ENCODE measurements at regions of chr11 and their contacts with region 1.

Region 1: GRCh38 chr11:119323538-119324033 is 6.7 kb upstream of the MCAM start:
- H3K4me3 ChIP-seq: no peak overlapping the region
- H3K27ac ChIP-seq: no peak overlapping the region
- H3K4me1 ChIP-seq: no peaks in the 10 kb centered on the region; the same call in 1 of the 2 replicates
- CTCF ChIP-seq: peak; percentile 44; the same call in 1 of the 2 replicates

Region 2: GRCh38 chr11:118870396-118871345 is 452.9 kb before region 1 on chr11:
- CTCF ChIA-PET with region 1: no interaction called
- POLR2A ChIA-PET with region 1: no interaction called
- H3K4me3 ChIP-seq: no peak overlapping the region
- H3K27ac ChIP-seq: no peak overlapping the region
- H3K4me1 ChIP-seq: no peaks in the 10 kb centered on the region
- CTCF ChIP-seq: no peak

Region 3: GRCh38 chr11:119196833-119197483 is 126.6 kb before region 1 on chr11:
- CTCF ChIA-PET with region 1: interaction called, 12 read pairs
- POLR2A ChIA-PET with region 1: no interaction called
- H3K4me3 ChIP-seq: no peak overlapping the region
- H3K27ac ChIP-seq: no peak overlapping the region
- H3K4me1 ChIP-seq: no peaks in the 10 kb centered on the region
- CTCF ChIP-seq: peak; percentile 60; the same call in 1 of the 2 replicates

Region 4: GRCh38 chr11:119300198-119300964 is 23.2 kb before region 1 on chr11:
- CTCF ChIA-PET with region 1: interaction called, 14 read pairs
- POLR2A ChIA-PET with region 1: no interaction called
- H3K4me3 ChIP-seq: no peak overlapping the region
- H3K27ac ChIP-seq: no peak overlapping the region
- H3K4me1 ChIP-seq: no peaks in the 10 kb centered on the region
- CTCF ChIP-seq: no peak

Region 5: DNA sequence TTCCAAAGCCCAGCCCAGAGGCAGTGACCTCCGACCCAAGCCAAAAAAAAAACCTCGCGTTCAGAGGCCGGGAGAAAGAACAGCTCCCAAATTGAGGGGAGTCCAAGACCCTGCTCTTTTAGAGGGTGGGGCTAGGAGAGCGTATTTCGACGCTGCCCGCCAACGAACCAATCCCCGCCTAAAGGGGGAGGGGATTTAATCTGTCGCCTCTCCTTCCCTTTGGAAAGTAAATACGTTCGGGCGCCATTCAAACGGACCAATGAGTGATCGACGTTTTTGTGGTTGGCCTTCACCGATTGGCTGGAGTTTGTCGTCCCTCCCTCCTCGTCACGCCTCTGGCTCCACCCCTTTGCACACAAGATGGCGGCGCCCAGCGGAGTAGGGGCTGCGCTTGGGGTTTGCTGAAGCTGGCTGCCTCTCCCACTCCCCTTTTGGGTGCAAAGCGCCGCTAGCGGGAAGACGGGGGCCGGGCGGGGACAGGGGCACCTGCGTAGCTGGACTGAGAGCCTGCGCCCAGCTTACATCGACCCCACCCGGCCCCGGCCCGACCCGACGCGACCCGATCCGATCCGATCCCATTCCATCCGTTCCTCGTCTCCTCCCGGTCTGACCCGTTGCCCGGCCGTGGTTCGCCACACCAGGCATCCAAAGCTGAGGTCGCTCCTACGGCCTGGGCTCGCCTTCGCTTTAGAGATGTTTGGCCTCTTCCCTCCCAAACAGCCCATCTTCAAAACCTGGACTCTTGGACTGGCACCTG is 10.8 kb after region 1 on chr11 and contains the start of gene RNF26:
- CTCF ChIA-PET with region 1: interaction called, 151 read pairs
- POLR2A ChIA-PET with region 1: interaction called, 6 read pairs
- H3K4me3 ChIP-seq: peak within 1 kb of the TSS; percentile 90
- H3K27ac ChIP-seq: peak within 1 kb of the TSS; percentile 18; the same call in 1 of the 2 replicates
- H3K4me1 ChIP-seq: no peaks in the 10 kb centered on the region
- CTCF ChIP-seq: no peak

Region 6: GRCh38 chr11:119373921-119374631 is 50.5 kb after region 1 on chr11:
- CTCF ChIA-PET with region 1: interaction called, 38 read pairs
- POLR2A ChIA-PET with region 1: interaction called, 3 read pairs
- H3K4me3 ChIP-seq: no peak overlapping the region
- H3K27ac ChIP-seq: no peak overlapping the region
- H3K4me1 ChIP-seq: peaks cover 2% of the 10 kb centered on the region; the same call in 1 of the 2 replicates
- CTCF ChIP-seq: peak; percentile 34; the same call in 1 of the 2 replicates

Region 7: DNA sequence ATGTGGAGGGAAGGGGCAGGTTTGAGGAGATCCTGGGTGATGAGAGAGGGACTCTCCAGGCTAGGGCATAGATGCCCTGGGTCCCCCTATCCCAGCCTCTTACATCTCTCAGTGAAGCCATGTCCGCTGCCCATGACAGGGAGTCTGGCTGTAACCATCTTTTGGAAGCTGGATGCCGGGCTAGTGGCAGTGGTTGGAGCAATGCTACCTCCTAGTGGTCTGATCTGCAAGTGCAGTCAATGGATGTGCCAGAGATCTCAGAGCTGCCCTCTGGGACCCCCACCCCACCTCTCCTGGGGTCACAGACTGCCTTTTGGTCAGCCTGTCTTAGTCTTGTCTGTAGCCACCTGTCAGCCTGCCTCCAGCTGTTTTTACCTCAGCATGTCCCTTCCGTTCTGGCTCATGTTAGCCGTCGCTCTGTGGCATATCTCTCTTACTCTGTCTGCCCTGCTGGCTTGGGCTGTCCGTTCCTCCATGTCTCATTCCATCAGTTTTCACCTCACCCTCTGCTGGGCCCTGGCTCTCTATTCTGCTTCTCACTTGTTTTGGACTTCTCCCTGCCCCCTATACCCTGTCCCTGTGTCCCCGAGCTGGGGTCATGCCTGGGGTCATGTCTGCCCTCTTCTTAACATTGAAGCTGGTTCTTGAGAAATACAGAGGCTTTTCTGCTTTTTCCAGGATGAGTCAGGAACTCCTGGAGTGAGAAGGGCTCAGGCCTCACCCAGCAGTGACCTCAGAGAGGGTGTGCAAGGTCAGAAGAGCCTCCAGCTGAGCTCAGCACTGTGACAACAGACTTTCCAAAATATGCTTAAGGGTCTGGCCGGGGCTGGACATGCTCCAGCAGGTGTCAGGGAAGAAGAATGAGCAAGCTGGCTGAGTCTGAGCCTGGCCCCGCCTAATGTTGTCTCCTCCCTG is 151.4 kb after region 1 on chr11:
- CTCF ChIA-PET with region 1: interaction called, 20 read pairs
- POLR2A ChIA-PET with region 1: no interaction called
- H3K4me3 ChIP-seq: no peak overlapping the region
- H3K27ac ChIP-seq: no peak overlapping the region
- H3K4me1 ChIP-seq: no peaks in the 10 kb centered on the region
- CTCF ChIP-seq: peak; percentile 74

Region 8: DNA sequence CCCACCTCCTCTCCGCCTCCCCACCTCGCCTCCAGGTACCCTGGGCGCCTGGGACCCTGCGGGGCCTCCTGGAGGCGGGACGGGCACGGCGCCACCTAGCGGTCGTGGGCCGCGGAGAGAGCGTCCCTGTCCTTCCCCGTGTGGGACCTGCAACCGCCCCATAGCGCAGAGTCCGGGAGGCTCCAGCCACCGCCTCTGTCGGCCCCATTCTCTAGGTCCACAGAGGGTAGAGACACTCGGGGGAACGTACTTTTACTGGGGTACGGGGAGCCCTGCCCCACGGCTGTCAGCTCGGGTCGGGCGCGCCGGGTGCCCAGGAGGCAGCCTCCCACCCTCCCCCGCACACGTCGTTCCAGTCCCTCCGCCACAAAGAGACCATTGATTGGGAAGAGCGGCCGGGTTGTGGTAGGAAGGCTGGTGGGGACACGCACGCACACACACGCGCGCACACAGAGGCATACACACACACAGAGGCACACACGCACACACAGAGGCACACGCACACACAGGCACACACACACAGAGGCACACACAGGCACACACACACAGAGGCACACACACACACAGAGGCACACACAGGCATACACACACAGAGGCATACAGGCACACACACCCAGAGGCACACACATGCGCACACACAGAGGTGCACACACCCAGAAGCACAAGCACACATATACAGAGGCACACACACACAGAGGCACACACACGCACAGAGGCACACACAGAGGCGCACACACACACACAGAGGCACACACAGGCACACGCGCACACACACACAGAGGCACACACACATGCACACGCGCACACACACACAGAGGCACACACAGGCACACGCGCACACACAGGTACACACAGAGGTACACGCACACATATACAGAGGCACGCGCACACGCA is 418.0 kb after region 1 on chr11:
- CTCF ChIA-PET with region 1: no interaction called
- POLR2A ChIA-PET with region 1: no interaction called
- H3K4me3 ChIP-seq: peak overlapping the region; percentile 23
- H3K27ac ChIP-seq: no peak overlapping the region
- H3K4me1 ChIP-seq: peaks cover 3% of the 10 kb centered on the region; the same call in 1 of the 2 replicates
- CTCF ChIP-seq: peak; percentile 78

Measured in HEK293 (cell line).